Adrenal gland (tissue), 19 donors: ENCODE measurements at regions of chr3 and their contacts with region 1.

Region 1: DNA sequence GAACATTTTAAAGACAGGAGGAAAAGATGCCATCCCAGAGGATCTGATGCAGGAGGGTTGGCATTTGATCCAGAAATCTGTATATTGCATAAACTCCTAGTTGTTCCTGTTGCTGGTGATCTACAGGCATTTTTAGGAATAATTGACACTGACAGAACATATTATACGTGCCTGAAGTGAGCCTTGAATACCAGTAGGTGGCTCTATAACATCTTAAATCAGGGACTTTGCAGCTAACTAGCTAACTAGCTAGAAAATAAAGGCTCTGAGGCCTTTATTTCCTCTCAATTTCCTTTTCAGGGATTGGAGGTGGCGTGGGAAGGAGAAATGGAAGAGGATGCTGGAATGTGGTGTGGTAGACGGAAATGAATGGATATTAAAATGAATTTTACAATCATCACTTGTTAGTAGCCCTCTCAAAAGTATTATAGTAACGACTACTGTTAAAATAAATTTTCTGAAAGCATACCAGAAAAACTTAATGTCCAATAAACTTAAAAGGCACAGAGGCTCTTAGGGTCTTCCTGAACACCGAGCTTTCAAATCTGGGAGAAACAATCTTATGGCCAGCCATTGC is 73.9 kb upstream of the ZBED2 start:
- DNase-seq: no peak
- H3K4me3 ChIP-seq: no peak overlapping the region
- H3K27ac ChIP-seq: no peak overlapping the region
- H3K4me1 ChIP-seq: no peaks in the 10 kb centered on the region
- H3K27me3 ChIP-seq: no peaks in the 10 kb centered on the region
- CTCF ChIP-seq: peak; percentile 41 to 85 (median 76)
- POLR2A ChIP-seq: no peak

Region 2: DNA sequence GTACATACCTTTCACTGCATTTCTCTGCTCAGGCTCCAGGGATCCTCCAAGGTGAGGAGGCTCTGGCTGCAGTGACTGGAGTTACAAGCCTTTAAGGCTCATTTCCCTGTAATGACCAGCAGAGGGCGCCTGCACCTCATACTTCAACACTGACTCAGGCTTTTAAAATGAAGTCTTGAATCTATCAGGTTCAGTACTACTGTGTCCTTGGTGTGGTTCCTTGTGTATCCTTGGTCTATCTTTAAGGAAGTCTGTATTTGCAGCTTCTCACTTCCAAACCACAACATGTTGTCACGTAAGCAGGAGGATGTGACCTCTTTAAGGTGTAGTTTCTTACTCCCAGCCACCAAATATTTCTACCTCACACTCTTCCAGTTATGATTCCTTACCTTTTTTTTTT is 48.6 kb after region 1 on chr3:
- intact Hi-C with region 1: loop called in 1 of 2 experiments (anchors 5 kb)
- DNase-seq: peak; percentile 62 to 96 (median 81)
- H3K4me3 ChIP-seq: no peak overlapping the region
- H3K27ac ChIP-seq: no peak overlapping the region
- H3K4me1 ChIP-seq: no peaks in the 10 kb centered on the region
- H3K27me3 ChIP-seq: no peaks in the 10 kb centered on the region
- CTCF ChIP-seq: peak; percentile 91 to 98 (median 97)
- POLR2A ChIP-seq: no peak

Region 3: DNA sequence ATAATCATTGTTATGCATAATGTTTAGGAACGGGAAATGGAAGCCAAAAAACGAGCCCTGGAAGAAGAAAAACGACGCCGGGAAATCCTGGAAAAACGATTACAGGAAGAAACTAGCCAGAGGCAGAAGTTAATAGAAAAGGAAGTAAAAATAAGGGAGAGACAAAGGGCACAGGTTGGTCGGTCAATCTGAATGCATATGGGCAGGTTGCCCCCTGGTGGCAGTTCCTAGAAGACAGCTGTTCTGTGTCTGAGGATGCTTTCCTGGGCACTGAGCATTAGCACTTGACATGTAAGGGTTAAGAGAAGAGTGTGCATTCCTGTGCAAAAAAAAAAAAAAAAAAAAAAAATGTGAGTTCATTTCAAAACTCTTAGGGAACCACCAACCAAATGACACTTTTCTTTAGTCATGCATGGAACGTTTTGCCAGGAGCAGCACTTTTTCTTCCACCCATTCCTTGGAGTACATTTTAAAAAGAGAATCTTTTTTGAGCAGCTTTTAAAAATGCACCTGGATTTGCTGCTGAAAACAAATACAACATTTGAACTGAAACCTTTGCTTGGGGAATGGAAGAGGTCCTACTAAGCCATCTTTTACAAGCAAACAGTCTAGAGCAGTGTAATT is 298.8 kb after region 1 on chr3:
- intact Hi-C with region 1: loop called in 1 of 2 experiments (anchors 5 kb)
- DNase-seq: peak; percentile 69 to 95 (median 88)
- H3K4me3 ChIP-seq: no peak overlapping the region
- H3K27ac ChIP-seq: peak overlapping the region in 2 of 5 donors; percentile 0 to 43
- H3K4me1 ChIP-seq: peaks cover 0 to 9% of the 10 kb centered on the region in 2 donors
- H3K27me3 ChIP-seq: no peaks in the 10 kb centered on the region
- CTCF ChIP-seq: peak; percentile 79 to 95 (median 92)
- POLR2A ChIP-seq: no peak

Region 4: DNA sequence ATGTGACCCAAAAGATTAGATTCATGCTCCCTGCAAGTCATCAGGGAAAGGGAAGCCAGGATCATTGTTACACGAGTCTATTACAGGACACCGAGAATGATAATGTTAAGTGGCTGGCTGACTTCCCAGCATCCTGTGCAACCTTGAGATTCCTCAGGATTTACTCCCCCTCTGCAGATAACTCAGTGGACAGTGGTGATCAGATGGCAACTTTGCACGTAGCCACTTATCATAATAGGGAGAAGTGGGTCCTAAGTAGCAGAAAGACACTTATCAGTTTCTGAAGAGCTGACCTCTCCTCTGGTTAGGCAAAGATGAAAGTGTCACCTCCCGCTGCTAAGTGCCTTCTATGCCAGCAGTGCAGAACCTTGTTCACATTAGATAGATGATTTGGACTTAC is 358.8 kb after region 1 on chr3:
- intact Hi-C with region 1: no loop called
- DNase-seq: peak; percentile 29 to 89 (median 86)
- H3K4me3 ChIP-seq: no peak overlapping the region
- H3K27ac ChIP-seq: no peak overlapping the region
- H3K4me1 ChIP-seq: peaks cover 5 to 6% of the 10 kb centered on the region in 2 donors
- H3K27me3 ChIP-seq: no peaks in the 10 kb centered on the region
- CTCF ChIP-seq: no peak
- POLR2A ChIP-seq: no peak